ENCODE measurements at regions of chr17 and their contacts with region 1.

Region 1: GRCh38 chr17:49976163-49976827 is 7.3 kb downstream of the DLX4 start:
- DNase-seq: no peak
- H3K4me3 ChIP-seq: no peak overlapping the region
- H3K27ac ChIP-seq: no peak overlapping the region
- H3K4me1 ChIP-seq: peaks cover 40% of the 10 kb centered on the region
- H3K27me3 ChIP-seq: peaks cover 20% of the 10 kb centered on the region
- CTCF ChIP-seq: no peak

Region 2: GRCh38 chr17:49899191-49899485 is 77.2 kb before region 1 on chr17:
- CTCF ChIA-PET with region 1: no interaction called
- dilution Hi-C with region 1: no loop called
- in situ Hi-C with region 1: no loop called
- intact Hi-C with region 1: no loop called
- DNase-seq: no peak
- H3K4me3 ChIP-seq: no peak overlapping the region
- H3K27ac ChIP-seq: no peak overlapping the region
- H3K4me1 ChIP-seq: peaks cover 13% of the 10 kb centered on the region
- H3K27me3 ChIP-seq: peaks cover 4% of the 10 kb centered on the region
- CTCF ChIP-seq: peak in 1 of 2 donors; percentile 32

Region 3: DNA sequence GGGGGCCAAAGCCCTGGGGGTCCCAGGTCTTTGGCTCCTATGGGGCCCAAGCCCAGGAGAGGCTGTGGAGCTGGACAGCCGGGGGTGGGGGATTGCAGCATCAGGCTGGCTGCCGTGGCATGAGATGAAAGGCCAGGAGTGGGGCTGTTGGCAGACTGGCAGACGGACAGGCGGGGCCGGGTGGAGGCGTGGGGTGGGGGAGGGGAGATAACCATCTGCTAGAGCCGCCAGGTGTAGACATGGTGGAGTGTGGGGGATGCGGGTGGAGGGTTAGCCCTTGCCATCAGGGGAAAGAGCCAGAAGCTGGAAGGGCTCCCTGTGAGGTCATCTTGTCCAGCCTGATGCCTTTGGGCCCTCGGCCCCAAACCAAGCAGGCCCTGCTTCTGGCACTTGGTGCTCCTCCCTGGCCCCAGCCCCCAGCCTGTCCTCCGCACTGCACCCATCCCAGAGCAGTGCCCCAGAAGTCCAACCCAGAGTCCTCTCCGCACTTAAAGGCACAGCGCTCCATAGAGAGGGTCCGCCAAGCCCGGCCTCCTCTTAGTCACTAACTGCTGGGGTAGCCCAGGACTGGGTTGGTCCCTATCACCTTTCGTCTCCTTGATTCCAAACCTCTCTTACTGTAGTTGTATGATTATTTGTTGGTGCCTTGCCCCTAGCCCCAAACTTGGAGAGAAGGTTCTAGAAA is 40.6 kb before region 1 on chr17:
- CTCF ChIA-PET with region 1: no interaction called
- dilution Hi-C with region 1: loop called (anchors 5 kb)
- in situ Hi-C with region 1: no loop called
- intact Hi-C with region 1: no loop called
- DNase-seq: no peak
- H3K4me3 ChIP-seq: no peak overlapping the region
- H3K27ac ChIP-seq: no peak overlapping the region
- H3K4me1 ChIP-seq: no peaks in the 10 kb centered on the region
- H3K27me3 ChIP-seq: peaks cover 4% of the 10 kb centered on the region
- CTCF ChIP-seq: no peak

Region 4: GRCh38 chr17:49987681-49988441 is 11.6 kb after region 1 on chr17:
- CTCF ChIA-PET with region 1: no interaction called
- dilution Hi-C with region 1: no loop called
- in situ Hi-C with region 1: no loop called
- intact Hi-C with region 1: loop called (anchors 1 kb)
- DNase-seq: peak; percentile 42
- H3K4me3 ChIP-seq: no peak overlapping the region
- H3K27ac ChIP-seq: no peak overlapping the region
- H3K4me1 ChIP-seq: peaks cover 13% of the 10 kb centered on the region
- H3K27me3 ChIP-seq: no peaks in the 10 kb centered on the region
- CTCF ChIP-seq: no peak

Region 5: GRCh38 chr17:50076591-50077235 is 100.4 kb after region 1 on chr17:
- CTCF ChIA-PET with region 1: no interaction called
- dilution Hi-C with region 1: no loop called
- in situ Hi-C with region 1: no loop called
- intact Hi-C with region 1: no loop called
- DNase-seq: no peak
- H3K4me3 ChIP-seq: no peak overlapping the region
- H3K27ac ChIP-seq: no peak overlapping the region
- H3K4me1 ChIP-seq: no peaks in the 10 kb centered on the region
- H3K27me3 ChIP-seq: no peaks in the 10 kb centered on the region
- CTCF ChIP-seq: no peak

Region 6: DNA sequence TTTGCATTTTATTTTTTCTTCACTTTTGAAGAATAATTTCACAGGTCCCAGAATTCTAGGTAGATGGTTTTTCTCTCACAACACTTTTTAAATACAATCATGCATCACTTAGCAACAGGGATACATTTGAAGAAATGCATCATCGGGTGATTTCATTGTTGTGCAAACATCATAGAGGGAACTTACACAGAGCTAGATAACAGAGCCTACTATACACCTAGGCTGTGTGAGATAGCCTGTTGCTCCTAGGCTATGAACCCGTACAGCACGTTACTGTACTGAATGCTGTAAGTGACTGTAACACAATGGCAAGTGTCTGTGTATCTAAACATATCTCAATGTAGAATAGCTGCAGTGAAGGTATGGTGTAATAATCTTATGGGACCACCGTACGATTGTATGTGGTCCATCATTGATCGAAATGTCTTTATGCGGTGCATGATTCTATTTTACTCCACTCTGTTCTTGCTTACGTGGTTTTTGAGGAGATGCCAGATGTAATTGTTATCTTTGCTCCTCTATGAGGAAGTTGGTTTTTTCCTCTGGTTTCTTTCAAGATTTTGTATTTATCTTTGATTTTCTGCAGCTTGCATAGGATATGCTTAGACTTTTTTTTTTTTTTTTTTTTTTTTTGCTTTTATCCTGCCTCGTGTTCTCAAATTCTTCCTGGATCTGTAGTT is 262.4 kb after region 1 on chr17:
- CTCF ChIA-PET with region 1: no interaction called
- dilution Hi-C with region 1: no loop called
- in situ Hi-C with region 1: no loop called
- intact Hi-C with region 1: no loop called
- DNase-seq: peak; percentile 21
- H3K4me3 ChIP-seq: no peak overlapping the region
- H3K27ac ChIP-seq: no peak overlapping the region
- H3K4me1 ChIP-seq: no peaks in the 10 kb centered on the region
- H3K27me3 ChIP-seq: no peaks in the 10 kb centered on the region
- CTCF ChIP-seq: no peak

Measured in mammary epithelial cell (primary cell).